ENCODE measurements at regions of chr5 and their contacts with region 1.

Region 1: DNA sequence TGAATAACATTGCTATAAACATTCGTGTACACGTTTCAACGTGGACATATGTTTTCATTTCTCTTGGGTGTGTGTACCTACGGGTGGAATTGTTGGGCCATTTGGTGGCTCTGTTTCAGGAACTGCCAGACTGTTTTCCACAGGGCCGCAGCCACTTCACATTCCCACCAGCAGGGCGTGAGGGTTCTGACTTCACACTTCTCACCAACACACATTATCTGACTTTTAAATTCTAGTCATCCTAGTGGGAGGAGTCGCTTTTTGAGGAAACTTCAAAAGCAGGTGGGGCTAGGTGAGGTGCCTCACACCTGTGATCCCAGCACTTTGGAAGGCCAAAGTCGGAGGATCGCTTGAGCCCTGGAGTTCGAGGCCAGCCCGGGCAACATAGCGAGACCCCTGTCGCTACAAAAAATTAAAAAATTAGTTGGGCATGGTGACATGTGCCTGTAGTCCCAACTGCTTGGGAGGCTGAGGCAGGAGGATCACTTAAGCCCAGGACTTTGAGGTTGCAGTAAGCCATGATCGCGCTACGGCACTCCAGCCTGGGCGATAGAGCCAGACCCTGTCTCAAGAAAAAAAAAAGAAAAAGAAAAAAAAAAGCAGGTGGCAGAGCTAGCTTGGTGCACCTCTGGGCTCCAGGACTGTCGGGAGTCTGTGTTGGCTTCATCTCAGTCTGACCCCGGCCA is 28.5 kb downstream of the TSPAN17 start:
- DNase-seq: peak; percentile 57
- ATAC-seq: peak; percentile 96
- H3K4me3 ChIP-seq: no peak overlapping the region
- H3K27ac ChIP-seq: no peak overlapping the region
- H3K4me1 ChIP-seq: peaks cover 7 to 16% of the 10 kb centered on the region in 2 experiments
- H3K27me3 ChIP-seq: no peaks in the 10 kb centered on the region
- CTCF ChIP-seq: peak; percentile 57 to 90 (median 88); a peak in 5 of 6 replicates
- POLR2A ChIP-seq: no peak
- RAD21 ChIP-seq: peak; percentile 39

Region 2: GRCh38 chr5:175681045-175681967 is 994.5 kb before region 1 on chr5:
- CTCF ChIA-PET with region 1: no interaction called
- POLR2A ChIA-PET with region 1: no interaction called
- RAD21 ChIA-PET with region 1: no interaction called
- intact Hi-C with region 1: no loop called
- DNase-seq: no peak
- ATAC-seq: no peak
- H3K4me3 ChIP-seq: no peak overlapping the region
- H3K27ac ChIP-seq: no peak overlapping the region
- H3K4me1 ChIP-seq: no peaks in the 10 kb centered on the region
- H3K27me3 ChIP-seq: peaks cover 68% of the 10 kb centered on the region
- CTCF ChIP-seq: no peak
- POLR2A ChIP-seq: no peak
- RAD21 ChIP-seq: no peak

Region 3: GRCh38 chr5:176948458-176948857 is 272.6 kb after region 1 on chr5:
- CTCF ChIA-PET with region 1: no interaction called
- POLR2A ChIA-PET with region 1: no interaction called
- RAD21 ChIA-PET with region 1: interaction called in 1 of 2 experiments, 3 read pairs
- intact Hi-C with region 1: loop called (anchors 5 kb)
- DNase-seq: no peak
- ATAC-seq: no peak
- H3K4me3 ChIP-seq: no peak overlapping the region
- H3K27ac ChIP-seq: no peak overlapping the region
- H3K4me1 ChIP-seq: no peaks in the 10 kb centered on the region
- H3K27me3 ChIP-seq: no peaks in the 10 kb centered on the region
- CTCF ChIP-seq: no peak
- POLR2A ChIP-seq: no peak
- RAD21 ChIP-seq: no peak